ENCODE measurements at regions of chr20 and their contacts with region 1.

Region 1: DNA sequence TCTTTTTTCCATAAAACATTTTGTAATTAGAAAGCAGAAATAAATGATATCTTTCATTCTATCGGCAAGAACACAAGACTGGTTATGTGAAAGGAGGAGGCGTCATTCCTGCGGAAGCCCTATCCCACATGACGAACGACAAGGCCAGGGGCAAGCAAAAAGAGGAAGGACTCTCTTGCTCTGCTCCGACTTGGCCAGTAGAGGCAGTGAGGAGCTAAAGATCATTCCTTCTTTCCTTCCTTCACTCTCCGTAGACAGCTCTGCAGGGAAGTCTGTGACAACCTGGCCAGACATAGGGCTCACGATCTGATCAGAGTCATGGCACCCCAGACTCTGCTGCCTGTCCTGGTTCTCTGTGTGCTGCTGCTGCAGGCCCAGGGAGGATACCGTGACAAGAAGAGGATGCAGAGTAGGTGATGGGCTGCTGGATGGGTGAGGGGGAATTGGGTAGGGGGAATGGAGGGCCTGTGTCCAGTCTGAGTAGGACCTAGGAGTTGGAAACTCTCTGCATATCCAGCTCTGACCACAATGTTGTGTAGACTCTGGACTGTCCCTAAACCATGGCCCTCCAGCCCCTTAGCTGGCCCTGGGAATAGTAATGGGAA is at the start of gene WFDC10A:
- DNase-seq: peak; percentile 23
- H3K4me3 ChIP-seq: no peak within 1 kb of the TSS
- H3K27ac ChIP-seq: no peak within 1 kb of the TSS
- H3K4me1 ChIP-seq: no peaks in the 10 kb centered on the region
- H3K27me3 ChIP-seq: no peaks in the 10 kb centered on the region
- CTCF ChIP-seq: peak; percentile 66 to 68
- POLR2A ChIP-seq: no peak
- total RNA-seq, gene WFDC10A: not detected in 2 replicates

Region 2: DNA sequence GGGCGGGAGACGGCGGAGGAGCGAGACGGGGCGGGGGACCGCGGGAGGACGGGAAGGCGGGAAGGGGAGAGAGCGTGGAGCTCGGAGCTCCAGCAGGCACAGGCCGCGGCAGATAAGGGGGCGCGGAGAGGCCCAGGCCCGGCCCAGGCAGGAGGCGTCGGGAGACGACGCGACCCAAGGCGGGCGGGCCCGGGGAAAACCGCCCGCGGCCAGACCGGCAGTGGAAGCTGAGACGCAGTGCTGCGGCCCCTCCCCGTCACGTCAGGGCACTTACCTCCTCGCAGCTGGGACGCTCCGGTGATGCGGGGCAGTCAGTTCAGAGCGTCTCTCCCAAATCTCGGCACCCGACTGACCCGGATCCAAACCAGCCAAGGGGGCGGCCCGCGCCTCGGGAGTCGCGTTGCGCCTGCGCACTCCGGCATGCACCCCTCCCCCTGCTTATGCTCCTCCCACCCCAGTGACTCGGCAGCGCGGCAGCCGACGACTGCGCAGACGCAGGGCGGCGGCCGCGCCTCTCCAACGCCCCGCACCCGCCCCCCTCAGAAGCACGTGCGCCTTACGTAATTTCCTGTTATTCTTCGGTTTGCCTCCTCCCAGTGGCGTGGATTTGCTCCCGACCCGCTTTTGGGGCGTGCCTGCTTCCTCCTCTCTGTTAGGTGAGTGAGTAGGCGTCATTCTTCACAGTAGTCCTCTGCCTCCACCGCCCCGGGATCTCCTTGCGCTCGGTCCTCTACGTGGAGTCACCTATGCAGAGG is 1419.0 kb before region 1 on chr20 and contains the start of gene OSER1:
- CTCF ChIA-PET with region 1: no interaction called
- POLR2A ChIA-PET with region 1: no interaction called
- dilution Hi-C with region 1: no loop called
- intact Hi-C with region 1: no loop called
- DNase-seq: peak; percentile 98
- H3K4me3 ChIP-seq: peak within 1 kb of the TSS; percentile 61 to 84 (median 79)
- H3K27ac ChIP-seq: peak within 1 kb of the TSS; percentile 87
- H3K4me1 ChIP-seq: peaks cover 27% of the 10 kb centered on the region
- H3K27me3 ChIP-seq: no peaks in the 10 kb centered on the region
- CTCF ChIP-seq: no peak
- POLR2A ChIP-seq: peak; percentile 88
- total RNA-seq, gene OSER1: 28.8 and 30.8 TPM in 2 replicates

Region 3: DNA sequence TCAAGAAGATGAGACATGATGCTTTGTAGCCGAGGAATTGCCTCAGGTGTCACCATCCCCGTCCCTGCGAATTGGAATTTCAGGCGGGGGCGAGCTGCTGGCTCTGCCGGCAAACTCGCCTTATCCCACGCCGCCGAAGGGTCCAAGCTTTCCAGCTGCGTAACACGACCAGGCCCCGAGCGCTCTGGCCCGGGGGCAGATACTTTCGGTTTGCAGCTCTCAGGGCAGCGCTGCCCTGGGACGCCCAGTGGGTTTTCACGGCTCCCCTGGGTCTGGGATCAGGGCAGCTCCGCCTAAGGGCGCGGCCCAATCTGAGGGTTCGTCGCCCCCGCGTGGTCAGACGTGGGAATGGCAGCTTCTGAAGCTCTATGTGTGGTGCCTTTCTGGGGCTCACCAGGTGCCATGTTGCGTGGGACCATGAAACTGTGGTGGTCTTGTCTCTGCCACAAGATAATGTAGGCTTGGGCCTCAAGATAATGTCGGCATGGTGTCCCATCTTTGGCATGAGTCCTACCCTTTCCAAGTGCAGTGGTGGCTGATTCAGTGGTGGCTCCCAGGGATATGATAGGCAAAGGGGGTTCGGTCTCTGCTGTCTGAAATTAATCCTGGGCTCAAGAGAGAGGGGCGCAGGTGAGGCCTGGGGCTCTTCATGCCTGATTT is 192.7 kb before region 1 on chr20:
- CTCF ChIA-PET with region 1: no interaction called
- POLR2A ChIA-PET with region 1: no interaction called
- dilution Hi-C with region 1: no loop called
- intact Hi-C with region 1: no loop called
- DNase-seq: peak; percentile 85
- H3K4me3 ChIP-seq: peak overlapping the region; percentile 42 to 71 (median 52)
- H3K27ac ChIP-seq: no peak overlapping the region
- H3K4me1 ChIP-seq: peaks cover 6% of the 10 kb centered on the region
- H3K27me3 ChIP-seq: no peaks in the 10 kb centered on the region
- CTCF ChIP-seq: peak; percentile 92 to 96
- POLR2A ChIP-seq: no peak

Region 4: GRCh38 chr20:45617591-45617990 is 12.0 kb before region 1 on chr20:
- CTCF ChIA-PET with region 1: interaction called, 21 read pairs
- POLR2A ChIA-PET with region 1: no interaction called
- dilution Hi-C with region 1: no loop called
- intact Hi-C with region 1: no loop called
- DNase-seq: no peak
- H3K4me3 ChIP-seq: no peak overlapping the region
- H3K27ac ChIP-seq: no peak overlapping the region
- H3K4me1 ChIP-seq: no peaks in the 10 kb centered on the region
- H3K27me3 ChIP-seq: no peaks in the 10 kb centered on the region
- CTCF ChIP-seq: no peak
- POLR2A ChIP-seq: no peak

Region 5: GRCh38 chr20:45647441-45648050 is 17.9 kb after region 1 on chr20:
- CTCF ChIA-PET with region 1: interaction called, 12 read pairs
- POLR2A ChIA-PET with region 1: no interaction called
- dilution Hi-C with region 1: no loop called
- intact Hi-C with region 1: no loop called
- DNase-seq: no peak
- H3K4me3 ChIP-seq: no peak overlapping the region
- H3K27ac ChIP-seq: no peak overlapping the region
- H3K4me1 ChIP-seq: no peaks in the 10 kb centered on the region
- H3K27me3 ChIP-seq: no peaks in the 10 kb centered on the region
- CTCF ChIP-seq: no peak
- POLR2A ChIP-seq: no peak